SK-MEL-5 (cell line): ENCODE measurements at regions of chr3 and their contacts with region 1.

Region 1: GRCh38 chr3:153903430-153903829 is 217.8 kb upstream of the ARHGEF26 start:
- DNase-seq: peak; percentile 11

Region 2: DNA sequence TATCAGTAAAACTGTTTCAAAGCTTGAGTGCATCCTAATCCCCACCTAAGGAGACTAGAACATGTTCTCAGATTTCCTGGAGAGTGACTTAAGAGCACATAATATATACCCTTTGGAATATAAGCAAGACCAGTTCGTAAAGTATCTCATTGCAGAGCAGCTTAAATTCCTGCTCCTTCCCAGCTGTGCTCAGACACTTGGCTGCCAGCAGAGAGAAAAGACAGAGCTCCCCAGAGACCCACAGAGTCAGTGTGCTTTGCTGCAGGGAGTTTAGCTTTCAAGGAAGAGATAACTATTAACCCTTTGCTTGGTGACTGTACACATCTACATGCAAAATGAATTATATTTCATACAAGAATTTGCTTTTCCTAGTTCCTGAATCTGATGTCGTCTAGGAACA is 120.3 kb before region 1 on chr3:
- in situ Hi-C with region 1: loop called (anchors 25 kb)
- DNase-seq: peak; percentile 70

Region 3: GRCh38 chr3:154132777-154133375 is 229.4 kb after region 1 on chr3:
- in situ Hi-C with region 1: no loop called
- DNase-seq: no peak